Mammary epithelial cell (primary cell): ENCODE measurements at regions of chr6 and their contacts with region 1.

Region 1: DNA sequence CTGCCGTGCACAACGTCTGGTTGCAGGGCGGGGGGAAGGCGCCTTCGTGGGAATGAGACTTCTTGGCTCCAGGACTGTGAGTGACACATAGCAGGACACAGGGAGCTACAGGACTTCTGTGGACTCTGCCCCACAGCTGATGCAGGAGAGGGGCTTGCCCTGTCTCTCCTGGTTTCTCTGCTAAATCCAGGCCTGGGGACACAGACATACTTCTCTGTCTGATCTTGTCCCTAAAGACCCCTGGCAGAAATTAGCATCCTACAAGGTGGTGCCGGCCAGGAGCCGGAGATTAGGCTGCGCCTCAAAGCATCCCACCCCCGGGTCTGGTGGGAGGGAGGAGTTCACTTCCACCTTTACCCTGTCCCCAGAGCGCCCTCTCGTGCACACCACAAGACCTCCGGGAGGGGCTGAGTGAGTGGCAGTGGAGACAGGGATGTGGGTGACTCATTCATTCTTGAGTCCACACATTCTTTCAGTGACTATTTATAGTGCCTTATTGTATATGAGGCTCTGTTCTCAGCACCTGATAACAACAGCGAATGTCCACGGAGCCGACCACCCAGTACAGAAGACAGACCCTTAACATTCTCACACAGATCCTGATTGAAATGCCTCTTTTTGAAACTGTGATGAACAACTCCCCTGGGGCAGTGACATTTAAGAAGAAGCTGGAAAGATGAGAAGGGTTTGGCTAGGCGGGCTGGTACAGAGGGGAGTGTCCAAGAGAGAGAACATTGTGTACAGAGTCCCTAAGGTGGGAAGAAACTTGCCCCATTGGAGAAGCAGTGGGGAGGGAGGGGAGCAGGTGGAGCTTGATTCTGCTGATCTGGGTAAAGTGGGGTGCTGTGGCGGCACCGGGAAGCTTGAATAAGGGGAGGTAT is 39.0 kb downstream of the GMPR start:
- DNase-seq: peak; percentile 84
- H3K4me3 ChIP-seq: peak overlapping the region in 1 of 3 experiments; percentile 8
- H3K27ac ChIP-seq: peak overlapping the region; percentile 31
- H3K4me1 ChIP-seq: peaks cover 15% of the 10 kb centered on the region
- H3K27me3 ChIP-seq: no peaks in the 10 kb centered on the region
- CTCF ChIP-seq: peak; percentile 57 to 79

Region 2: DNA sequence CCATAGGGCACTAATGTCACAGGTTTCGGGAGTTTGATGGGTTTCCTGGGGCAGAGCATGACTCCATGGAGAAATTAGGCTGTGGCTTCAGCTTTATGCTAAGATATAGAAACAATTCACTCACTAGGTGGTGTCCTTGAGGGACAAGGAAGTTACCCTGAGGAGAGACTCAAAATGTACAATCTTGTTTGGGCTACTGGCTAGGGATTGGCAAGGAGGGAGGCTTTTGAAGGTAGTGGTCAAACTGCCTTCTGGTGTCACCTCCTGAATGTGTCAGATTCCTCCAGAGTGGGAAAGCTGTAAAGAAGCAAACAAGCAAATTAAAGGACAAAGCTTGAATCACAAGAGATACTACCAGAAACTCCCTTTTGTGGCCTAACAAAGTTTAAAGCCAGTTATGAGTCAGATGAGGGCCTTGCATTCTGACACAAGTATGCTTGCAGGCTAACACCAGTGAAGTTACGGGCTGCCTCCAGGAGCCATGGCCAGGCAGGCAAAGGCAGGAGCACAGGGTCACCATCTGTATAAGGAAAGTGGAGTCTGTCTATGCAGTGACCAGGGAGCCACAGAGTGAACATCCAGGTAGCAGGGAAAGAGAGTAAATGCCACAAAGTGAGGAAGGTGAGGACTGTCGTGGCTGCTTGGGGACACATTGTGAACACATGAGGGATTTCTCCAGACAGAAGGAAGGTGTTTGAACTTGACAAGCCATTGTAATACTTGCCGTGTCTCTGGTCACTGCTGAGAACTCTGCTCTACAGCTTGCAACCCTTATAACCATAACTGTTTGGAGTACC is 506.8 kb before region 1 on chr6:
- CTCF ChIA-PET with region 1: no interaction called
- dilution Hi-C with region 1: no loop called
- in situ Hi-C with region 1: no loop called
- intact Hi-C with region 1: no loop called
- DNase-seq: peak; percentile 48
- H3K4me3 ChIP-seq: no peak overlapping the region
- H3K27ac ChIP-seq: no peak overlapping the region
- H3K4me1 ChIP-seq: no peaks in the 10 kb centered on the region
- H3K27me3 ChIP-seq: peaks cover 2% of the 10 kb centered on the region
- CTCF ChIP-seq: peak in 1 of 2 donors; percentile 21

Region 3: GRCh38 chr6:16183187-16183664 is 94.1 kb before region 1 on chr6:
- CTCF ChIA-PET with region 1: interaction called, 4 read pairs
- dilution Hi-C with region 1: no loop called
- in situ Hi-C with region 1: no loop called
- intact Hi-C with region 1: loop called (anchors 1 kb)
- DNase-seq: peak; percentile 19
- H3K4me3 ChIP-seq: no peak overlapping the region
- H3K27ac ChIP-seq: no peak overlapping the region
- H3K4me1 ChIP-seq: peaks cover 6% of the 10 kb centered on the region
- H3K27me3 ChIP-seq: no peaks in the 10 kb centered on the region
- CTCF ChIP-seq: peak; percentile 61 to 63

Region 4: GRCh38 chr6:16206595-16207037 is 70.7 kb before region 1 on chr6:
- CTCF ChIA-PET with region 1: no interaction called
- dilution Hi-C with region 1: no loop called
- in situ Hi-C with region 1: no loop called
- intact Hi-C with region 1: loop called (anchors 2 kb)
- DNase-seq: peak; percentile 64
- H3K4me3 ChIP-seq: no peak overlapping the region
- H3K27ac ChIP-seq: no peak overlapping the region
- H3K4me1 ChIP-seq: no peaks in the 10 kb centered on the region
- H3K27me3 ChIP-seq: no peaks in the 10 kb centered on the region
- CTCF ChIP-seq: peak; percentile 86 to 97

Region 5: DNA sequence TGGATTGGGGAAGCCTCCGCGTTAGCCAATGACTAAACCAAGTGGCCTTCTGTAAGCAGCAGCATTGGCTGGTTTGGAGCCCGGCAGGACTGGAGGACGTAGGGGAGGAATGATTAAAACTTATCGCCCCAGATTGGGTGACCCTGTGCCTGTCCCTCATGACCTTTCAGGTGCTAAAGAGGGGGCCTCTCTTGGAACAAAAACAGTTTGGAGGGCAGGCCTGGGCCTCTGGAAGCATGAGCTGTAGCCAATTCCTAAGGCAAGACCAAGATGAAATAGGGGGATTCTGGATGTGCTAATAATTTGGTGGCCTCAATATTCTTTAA is 37.6 kb before region 1 on chr6:
- CTCF ChIA-PET with region 1: no interaction called
- dilution Hi-C with region 1: no loop called
- in situ Hi-C with region 1: no loop called
- intact Hi-C with region 1: loop called (anchors 5 kb)
- DNase-seq: no peak
- H3K4me3 ChIP-seq: no peak overlapping the region
- H3K27ac ChIP-seq: no peak overlapping the region
- H3K4me1 ChIP-seq: peaks cover 34% of the 10 kb centered on the region
- H3K27me3 ChIP-seq: no peaks in the 10 kb centered on the region
- CTCF ChIP-seq: no peak

Region 6: DNA sequence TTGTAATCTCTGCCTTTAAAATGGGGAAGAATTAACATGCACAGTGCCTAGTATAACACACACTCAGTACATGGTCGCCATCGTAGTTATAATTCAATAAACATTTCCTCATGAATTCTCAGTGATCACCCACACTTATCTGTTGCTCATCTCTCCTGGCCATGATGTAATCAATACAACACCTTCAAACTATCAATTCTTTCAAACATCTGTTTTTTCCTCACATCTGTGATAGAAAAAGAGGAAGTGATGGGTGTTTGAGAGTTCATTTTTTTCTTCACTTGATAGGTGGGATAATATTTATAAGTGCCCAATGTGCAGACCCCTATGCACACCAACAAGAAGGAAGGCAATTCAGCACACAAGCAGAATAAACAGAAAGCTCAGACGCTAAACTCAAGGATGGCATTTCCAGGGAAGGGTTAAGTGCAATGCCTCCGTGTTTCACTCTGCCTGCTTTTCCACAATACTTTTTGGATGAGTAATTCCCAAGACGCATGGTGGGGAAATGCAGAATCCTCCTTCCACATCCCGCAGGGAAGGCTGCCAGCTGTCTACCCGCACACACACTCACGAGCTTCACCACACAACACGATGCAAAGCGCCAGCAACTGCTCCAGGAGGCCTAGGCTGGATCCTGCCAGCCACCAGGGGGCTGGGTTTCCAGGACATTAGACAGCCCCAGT is 61.4 kb after region 1 on chr6:
- CTCF ChIA-PET with region 1: no interaction called
- dilution Hi-C with region 1: no loop called
- in situ Hi-C with region 1: no loop called
- intact Hi-C with region 1: no loop called
- DNase-seq: peak; percentile 86
- H3K4me3 ChIP-seq: no peak overlapping the region
- H3K27ac ChIP-seq: peak overlapping the region; percentile 9
- H3K4me1 ChIP-seq: peaks cover 56% of the 10 kb centered on the region
- H3K27me3 ChIP-seq: no peaks in the 10 kb centered on the region
- CTCF ChIP-seq: peak; percentile 58 to 60